Psoas muscle (tissue), 8 donors: ENCODE measurements at regions of chr2 and their contacts with region 1.

Region 1: DNA sequence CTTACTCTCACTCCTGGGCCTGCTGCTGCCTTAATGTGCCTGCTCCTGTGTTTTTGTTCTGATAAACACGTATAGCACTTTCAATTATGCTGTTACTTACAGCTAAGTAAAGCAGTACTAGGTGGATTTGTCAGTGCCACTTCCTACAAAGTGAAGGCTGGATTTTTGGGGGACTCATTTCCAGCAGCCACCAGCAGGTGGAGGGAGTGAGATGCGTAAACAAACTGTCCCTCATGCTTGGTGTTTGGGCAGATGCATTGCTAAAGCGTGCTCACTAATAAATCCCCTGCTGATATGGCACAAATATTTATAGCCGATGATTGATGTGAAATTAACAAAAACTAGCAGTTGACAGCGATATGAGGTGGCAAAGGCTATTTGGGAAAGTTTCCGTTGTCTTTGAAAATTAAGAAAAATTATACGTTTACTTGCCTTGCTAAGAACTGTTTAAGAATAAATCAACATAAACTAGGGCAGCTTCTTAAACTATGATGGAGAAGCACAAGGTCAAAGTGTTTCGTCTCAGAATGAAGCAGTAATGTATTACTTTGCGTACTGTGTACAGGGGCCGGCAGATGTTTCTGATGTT is 101.7 kb downstream of the AGAP1 start:
- DNase-seq: peak; percentile 68 to 80
- ATAC-seq: peak; percentile 57 to 89 (median 74)
- H3K4me3 ChIP-seq: no peak overlapping the region
- H3K27ac ChIP-seq: no peak overlapping the region
- H3K4me1 ChIP-seq: no peaks in the 10 kb centered on the region
- H3K27me3 ChIP-seq: no peaks in the 10 kb centered on the region
- CTCF ChIP-seq: peak; percentile 89

Region 2: DNA sequence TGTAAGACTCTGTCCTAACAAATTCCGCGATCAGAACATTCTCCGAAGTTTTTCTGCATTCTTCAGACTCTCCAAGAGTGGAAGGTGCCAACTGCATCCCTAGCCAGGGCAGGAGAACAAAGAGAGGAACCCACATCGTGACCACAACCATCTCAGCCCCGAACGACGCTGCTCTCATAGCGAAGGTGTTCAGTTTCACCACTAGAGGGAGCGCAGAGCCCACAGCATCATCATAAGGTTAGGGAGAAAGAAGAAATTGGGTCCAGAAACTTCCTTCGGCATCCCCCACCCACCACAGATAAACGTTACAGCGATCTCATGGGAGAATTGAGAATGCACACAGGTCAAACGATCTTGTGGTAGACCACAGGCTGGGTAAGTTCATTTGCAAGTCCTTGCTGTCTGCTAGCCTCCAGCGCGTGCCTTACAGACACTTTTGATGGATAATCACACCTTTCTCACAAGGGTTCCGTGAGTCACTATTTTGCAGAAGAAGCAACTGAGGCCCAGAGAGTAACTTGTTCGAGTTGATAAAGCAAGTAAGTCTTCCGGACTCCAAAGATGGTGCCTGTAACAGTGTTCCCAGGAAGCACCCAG is 1044.9 kb before region 1 on chr2:
- intact Hi-C with region 1: loop called in 1 of 2 experiments (anchors 10 kb)
- DNase-seq: peak; percentile 59 to 73
- ATAC-seq: peak; percentile 63 to 86 (median 73)
- H3K4me3 ChIP-seq: no peak overlapping the region
- H3K27ac ChIP-seq: no peak overlapping the region
- H3K4me1 ChIP-seq: no peaks in the 10 kb centered on the region
- H3K27me3 ChIP-seq: peaks cover 0 to 23% (median 0%) of the 10 kb centered on the region in 3 donors
- CTCF ChIP-seq: peak; percentile 93

Region 3: GRCh38 chr2:235135990-235136561 is 459.4 kb before region 1 on chr2:
- intact Hi-C with region 1: loop called (anchors 2 to 5 kb)
- DNase-seq: peak; percentile 75 to 83
- ATAC-seq: peak; percentile 58 to 73 (median 64)
- H3K4me3 ChIP-seq: no peak overlapping the region
- H3K27ac ChIP-seq: no peak overlapping the region
- H3K4me1 ChIP-seq: no peaks in the 10 kb centered on the region
- H3K27me3 ChIP-seq: no peaks in the 10 kb centered on the region
- CTCF ChIP-seq: peak; percentile 68

Region 4: GRCh38 chr2:235433860-235434259 is 161.7 kb before region 1 on chr2:
- intact Hi-C with region 1: loop called (anchors 5 kb)
- DNase-seq: peak; percentile 66 to 72
- ATAC-seq: peak; percentile 83 to 94 (median 89)
- H3K4me3 ChIP-seq: no peak overlapping the region
- H3K27ac ChIP-seq: peak overlapping the region; percentile 63
- H3K4me1 ChIP-seq: peaks cover 17% of the 10 kb centered on the region
- H3K27me3 ChIP-seq: peaks cover 0 to 3% (median 0%) of the 10 kb centered on the region in 3 donors
- CTCF ChIP-seq: peak; percentile 26

Region 5: DNA sequence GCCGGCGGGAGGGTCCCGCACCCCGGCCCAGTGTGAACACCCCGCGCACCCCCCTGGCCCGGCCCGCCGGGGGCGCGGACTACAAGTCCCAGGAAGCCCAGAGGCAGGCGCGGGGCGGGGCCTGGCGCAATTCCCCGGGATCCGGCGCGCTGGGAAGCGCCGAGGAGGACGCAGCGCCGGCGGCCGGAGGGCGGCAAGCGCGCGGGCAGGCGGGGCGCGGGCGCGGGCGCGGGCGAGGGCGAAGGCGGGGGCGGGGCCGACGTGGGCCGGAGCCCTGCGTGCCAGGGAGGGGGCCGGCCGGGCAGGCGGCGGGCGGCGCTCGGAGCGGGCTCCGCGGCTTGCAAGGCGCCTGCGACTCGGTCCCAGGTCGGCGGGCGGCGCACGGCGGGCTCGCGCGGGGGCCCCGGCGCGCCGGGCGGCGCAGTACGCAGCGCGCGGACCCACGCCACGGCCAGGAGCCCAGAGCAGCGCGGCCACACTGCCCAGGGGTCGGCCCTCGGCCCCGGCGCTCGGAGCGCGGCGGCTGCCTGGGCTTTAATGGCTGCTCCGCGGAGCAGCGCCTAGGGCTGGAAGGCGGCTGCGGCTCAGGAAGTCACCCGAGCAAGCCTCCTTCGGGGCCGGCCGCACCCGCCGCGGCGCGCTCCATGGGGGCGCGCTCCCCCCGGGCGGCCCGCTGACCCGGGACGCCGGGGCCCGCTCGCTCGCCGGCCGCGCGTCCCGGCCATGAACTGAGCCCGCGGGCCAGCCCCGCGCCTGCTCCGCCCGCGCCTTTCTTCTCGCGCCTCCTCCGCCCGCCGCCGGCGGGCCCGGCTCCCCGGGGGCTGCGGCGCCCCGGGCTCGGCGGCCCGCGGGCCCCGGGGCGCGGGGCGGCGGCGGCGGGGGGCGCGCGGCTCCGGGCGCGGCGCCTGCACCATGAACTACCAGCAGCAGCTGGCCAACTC is 101.5 kb before region 1 on chr2 and contains the start of gene AGAP1:
- intact Hi-C with region 1: loop called in 1 of 2 experiments (anchors 5 kb)
- DNase-seq: peak; percentile 92 to 95
- ATAC-seq: peak; percentile 91 to 94 (median 93)
- H3K4me3 ChIP-seq: peak within 1 kb of the TSS; percentile 83
- H3K27ac ChIP-seq: peak within 1 kb of the TSS; percentile 87
- H3K4me1 ChIP-seq: peaks cover 28% of the 10 kb centered on the region
- H3K27me3 ChIP-seq: peaks cover 0 to 3% (median 0%) of the 10 kb centered on the region in 3 donors
- CTCF ChIP-seq: no peak
- total RNA-seq, gene AGAP1: 14.3 to 21.6 (median 18.6) TPM

Region 6: DNA sequence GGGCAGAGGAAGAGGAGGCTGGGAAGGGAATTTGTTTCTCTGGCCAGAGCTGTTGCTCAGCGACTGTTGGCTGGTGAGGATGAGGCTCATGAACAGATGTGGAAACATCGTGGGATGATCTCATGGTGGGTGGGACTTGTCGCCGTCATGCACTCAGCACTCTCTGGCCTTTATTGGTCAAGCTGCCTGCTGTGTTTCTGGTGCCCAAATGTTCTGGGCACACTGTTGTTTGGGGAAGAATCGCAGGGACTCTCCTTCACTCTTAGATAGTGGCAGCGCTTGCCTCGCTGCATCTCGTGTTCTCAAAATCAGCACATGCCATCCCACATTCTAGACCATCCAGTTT is 43.9 kb after region 1 on chr2:
- intact Hi-C with region 1: no loop called
- DNase-seq: peak; percentile 78 to 86
- ATAC-seq: peak; percentile 82 to 95 (median 92)
- H3K4me3 ChIP-seq: no peak overlapping the region
- H3K27ac ChIP-seq: peak overlapping the region; percentile 65
- H3K4me1 ChIP-seq: peaks cover 39% of the 10 kb centered on the region
- H3K27me3 ChIP-seq: no peaks in the 10 kb centered on the region
- CTCF ChIP-seq: no peak

Region 7: GRCh38 chr2:235669269-235669831 is 73.8 kb after region 1 on chr2:
- intact Hi-C with region 1: loop called (anchors 2 to 5 kb)
- DNase-seq: peak; percentile 83 to 86
- ATAC-seq: peak; percentile 81 to 86 (median 82)
- H3K4me3 ChIP-seq: peak overlapping the region; percentile 66
- H3K27ac ChIP-seq: no peak overlapping the region
- H3K4me1 ChIP-seq: peaks cover 22% of the 10 kb centered on the region
- H3K27me3 ChIP-seq: peaks cover 0 to 1% (median 0%) of the 10 kb centered on the region in 3 donors
- CTCF ChIP-seq: no peak

Region 8: GRCh38 chr2:235746257-235747084 is 151.0 kb after region 1 on chr2:
- intact Hi-C with region 1: loop called (anchors 1 to 2 kb)
- DNase-seq: peak in 1 of 2 donors; percentile 48
- ATAC-seq: peak; percentile 79 to 93 (median 89)
- H3K4me3 ChIP-seq: no peak overlapping the region
- H3K27ac ChIP-seq: no peak overlapping the region
- H3K4me1 ChIP-seq: peaks cover 16% of the 10 kb centered on the region
- H3K27me3 ChIP-seq: no peaks in the 10 kb centered on the region
- CTCF ChIP-seq: peak; percentile 79